ENCODE measurements at regions of chr2 and their contacts with region 1.

Region 1: DNA sequence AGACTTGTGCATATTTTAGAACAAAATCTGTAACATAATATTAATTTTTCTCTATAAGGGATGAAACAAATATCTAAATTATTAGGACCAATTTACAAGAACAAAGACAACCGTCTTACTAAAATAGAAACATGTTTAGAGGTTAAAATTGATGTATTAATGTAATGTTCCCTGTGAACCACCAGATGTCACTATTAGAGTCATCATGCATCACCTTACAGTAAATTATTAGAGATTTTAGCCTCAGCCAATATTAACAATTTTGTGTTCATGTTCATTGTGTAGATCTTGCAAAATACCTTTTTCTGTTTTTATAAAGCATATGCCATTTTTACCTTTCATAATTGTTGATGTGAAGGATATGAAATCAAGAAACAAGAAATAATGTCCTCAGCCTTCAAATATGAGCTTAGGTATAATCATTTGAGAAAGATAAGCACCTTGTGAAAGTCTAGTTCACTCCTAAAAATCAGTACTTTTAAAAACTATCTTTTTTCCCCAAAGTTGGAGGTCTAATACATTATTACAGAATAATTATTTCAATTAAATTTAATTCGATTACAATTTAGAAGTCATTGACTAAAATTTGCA is 344.3 kb upstream of the KCNH7 start:
- DNase-seq: peak; percentile 35
- H3K4me3 ChIP-seq: no peak overlapping the region
- H3K27ac ChIP-seq: no peak overlapping the region
- H3K4me1 ChIP-seq: peaks cover 8% of the 10 kb centered on the region
- H3K27me3 ChIP-seq: no peaks in the 10 kb centered on the region
- CTCF ChIP-seq: peak; percentile 33 to 38
- POLR2A ChIP-seq: no peak

Region 2: GRCh38 chr2:163171786-163172531 is 10.9 kb before region 1 on chr2:
- CTCF ChIA-PET with region 1: interaction called, 121 read pairs
- POLR2A ChIA-PET with region 1: no interaction called
- dilution Hi-C with region 1: no loop called
- intact Hi-C with region 1: no loop called
- DNase-seq: no peak
- H3K4me3 ChIP-seq: no peak overlapping the region
- H3K27ac ChIP-seq: no peak overlapping the region
- H3K4me1 ChIP-seq: no peaks in the 10 kb centered on the region
- H3K27me3 ChIP-seq: no peaks in the 10 kb centered on the region
- CTCF ChIP-seq: no peak
- POLR2A ChIP-seq: no peak

Region 3: DNA sequence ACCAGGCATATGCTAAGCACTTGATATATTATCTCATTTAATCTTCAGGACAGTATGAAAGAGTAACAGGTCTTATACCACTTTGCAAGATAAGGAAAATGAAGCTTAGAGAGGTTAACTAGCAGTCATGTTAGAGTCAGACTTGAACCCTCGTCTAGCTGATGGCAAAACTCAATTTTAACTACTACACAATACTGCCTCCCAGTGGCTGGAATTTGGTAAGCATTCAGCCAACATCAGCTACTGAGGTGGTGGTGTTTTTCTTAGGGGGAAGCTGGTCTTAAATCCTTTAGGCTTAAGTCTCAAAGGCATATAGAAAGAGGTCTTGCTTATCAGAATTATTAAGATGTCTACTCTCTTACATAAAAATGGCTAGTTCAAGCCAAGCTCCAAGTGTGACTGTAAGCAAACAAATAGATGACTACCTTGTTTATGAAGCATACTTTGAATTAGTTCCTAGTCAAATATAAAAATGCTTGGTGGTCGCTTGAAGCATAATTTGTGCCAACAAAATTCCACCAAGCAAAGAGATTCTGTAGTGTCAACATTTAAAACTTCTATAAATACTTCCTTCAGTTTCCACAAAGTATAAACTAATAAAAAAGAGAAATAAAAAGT is 878.4 kb after region 1 on chr2:
- CTCF ChIA-PET with region 1: interaction called, 152 read pairs
- POLR2A ChIA-PET with region 1: no interaction called
- dilution Hi-C with region 1: no loop called
- intact Hi-C with region 1: loop called (anchors 1 kb)
- DNase-seq: peak; percentile 61
- H3K4me3 ChIP-seq: no peak overlapping the region
- H3K27ac ChIP-seq: no peak overlapping the region
- H3K4me1 ChIP-seq: no peaks in the 10 kb centered on the region
- H3K27me3 ChIP-seq: no peaks in the 10 kb centered on the region
- CTCF ChIP-seq: peak; percentile 53 to 58
- POLR2A ChIP-seq: no peak

Region 4: DNA sequence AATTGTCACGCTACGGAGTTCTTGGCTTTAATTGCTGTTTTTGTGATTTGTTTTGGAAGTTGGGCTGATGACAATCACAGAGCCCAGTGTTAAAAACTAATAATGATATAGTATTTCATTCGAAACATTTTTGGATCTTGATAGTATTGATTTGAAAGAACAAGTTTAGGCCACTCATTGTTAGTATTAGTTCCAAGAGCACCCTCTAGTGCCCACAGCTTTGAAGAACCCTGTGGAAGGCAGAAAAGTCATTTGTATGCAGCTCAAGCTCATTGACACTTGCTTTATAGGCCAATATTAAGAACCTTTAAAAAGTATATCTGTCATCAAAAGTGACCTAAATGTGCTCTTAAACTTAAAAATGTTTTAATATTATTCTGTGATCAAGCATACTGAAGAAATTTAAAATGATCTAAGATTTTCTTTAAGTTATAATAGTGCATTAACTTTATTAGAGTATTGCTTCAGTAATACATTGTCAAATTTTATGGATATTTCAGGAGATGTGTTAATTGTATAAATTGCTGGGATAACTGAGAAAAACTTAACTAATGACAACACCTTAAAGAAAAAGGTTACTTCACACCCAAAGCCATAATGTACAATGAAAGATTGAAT is 1247.4 kb after region 1 on chr2:
- CTCF ChIA-PET with region 1: interaction called, 113 read pairs
- POLR2A ChIA-PET with region 1: no interaction called
- dilution Hi-C with region 1: no loop called
- intact Hi-C with region 1: loop called (anchors 5 kb)
- DNase-seq: peak; percentile 60
- H3K4me3 ChIP-seq: no peak overlapping the region
- H3K27ac ChIP-seq: no peak overlapping the region
- H3K4me1 ChIP-seq: no peaks in the 10 kb centered on the region
- H3K27me3 ChIP-seq: no peaks in the 10 kb centered on the region
- CTCF ChIP-seq: peak; percentile 48 to 57
- POLR2A ChIP-seq: no peak

Region 5: GRCh38 chr2:164473021-164473420 is 1290.2 kb after region 1 on chr2:
- CTCF ChIA-PET with region 1: interaction called, 89 read pairs
- POLR2A ChIA-PET with region 1: no interaction called
- dilution Hi-C with region 1: no loop called
- intact Hi-C with region 1: no loop called
- DNase-seq: no peak
- H3K4me3 ChIP-seq: no peak overlapping the region
- H3K27ac ChIP-seq: no peak overlapping the region
- H3K4me1 ChIP-seq: no peaks in the 10 kb centered on the region
- H3K27me3 ChIP-seq: peaks cover 0 to 3% of the 10 kb centered on the region in 2 experiments
- CTCF ChIP-seq: no peak
- POLR2A ChIP-seq: no peak

Region 6: DNA sequence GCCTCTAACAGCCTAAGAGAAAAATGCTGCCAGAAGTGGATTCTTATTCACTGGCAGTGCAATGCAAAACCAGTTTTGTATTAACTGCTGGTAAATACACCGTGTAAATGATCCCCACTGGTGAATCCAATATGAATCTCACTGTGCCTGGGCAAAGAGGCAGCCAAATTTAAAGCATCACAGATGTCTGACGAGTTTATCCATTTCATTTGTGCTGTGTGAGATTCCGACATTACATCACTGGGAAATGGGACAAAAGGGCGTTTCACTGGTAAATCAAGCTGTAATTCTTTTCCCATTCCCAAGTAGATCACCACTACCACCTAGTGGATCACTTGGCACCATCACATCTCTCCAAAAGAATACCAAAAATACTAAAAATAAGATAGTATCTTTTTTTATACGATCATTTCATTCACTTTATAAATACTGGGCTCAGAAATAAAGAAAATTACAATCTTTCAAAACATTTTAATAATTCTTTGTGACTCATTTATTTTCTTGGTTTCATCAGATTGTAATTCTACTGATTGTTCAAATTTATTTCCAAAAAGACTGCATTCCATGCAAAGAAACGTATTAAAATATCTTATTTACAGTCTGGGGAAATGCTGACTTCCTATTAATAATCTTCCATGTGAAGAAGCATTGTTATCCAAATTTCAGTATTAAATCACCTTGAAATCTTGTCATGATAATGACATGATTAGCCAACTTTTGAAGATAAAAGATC is 1312.8 kb after region 1 on chr2:
- CTCF ChIA-PET with region 1: interaction called, 52 read pairs
- POLR2A ChIA-PET with region 1: no interaction called
- dilution Hi-C with region 1: no loop called
- intact Hi-C with region 1: no loop called
- DNase-seq: peak; percentile 44
- H3K4me3 ChIP-seq: no peak overlapping the region
- H3K27ac ChIP-seq: no peak overlapping the region
- H3K4me1 ChIP-seq: peaks cover 7% of the 10 kb centered on the region
- H3K27me3 ChIP-seq: no peaks in the 10 kb centered on the region
- CTCF ChIP-seq: peak; percentile 34 to 41
- POLR2A ChIP-seq: no peak

Measured in endothelial cell of umbilical vein (primary cell).